ENCODE measurements at regions of chr17 and their contacts with region 1.

Region 1: GRCh38 chr17:41811549-41812380 is at the start of gene P3H4:
- DNase-seq: peak in 1 of 2 donors; percentile 85
- H3K4me3 ChIP-seq: peak within 1 kb of the TSS; percentile 81 to 89
- H3K27ac ChIP-seq: peak within 1 kb of the TSS; percentile 77 to 87
- H3K4me1 ChIP-seq: peaks cover 10 to 20% of the 10 kb centered on the region in 2 donors
- H3K27me3 ChIP-seq: no peaks in the 10 kb centered on the region
- CTCF ChIP-seq: peak; percentile 62 to 83 (median 76)
- total RNA-seq, gene P3H4: 61.4 TPM

Region 2: DNA sequence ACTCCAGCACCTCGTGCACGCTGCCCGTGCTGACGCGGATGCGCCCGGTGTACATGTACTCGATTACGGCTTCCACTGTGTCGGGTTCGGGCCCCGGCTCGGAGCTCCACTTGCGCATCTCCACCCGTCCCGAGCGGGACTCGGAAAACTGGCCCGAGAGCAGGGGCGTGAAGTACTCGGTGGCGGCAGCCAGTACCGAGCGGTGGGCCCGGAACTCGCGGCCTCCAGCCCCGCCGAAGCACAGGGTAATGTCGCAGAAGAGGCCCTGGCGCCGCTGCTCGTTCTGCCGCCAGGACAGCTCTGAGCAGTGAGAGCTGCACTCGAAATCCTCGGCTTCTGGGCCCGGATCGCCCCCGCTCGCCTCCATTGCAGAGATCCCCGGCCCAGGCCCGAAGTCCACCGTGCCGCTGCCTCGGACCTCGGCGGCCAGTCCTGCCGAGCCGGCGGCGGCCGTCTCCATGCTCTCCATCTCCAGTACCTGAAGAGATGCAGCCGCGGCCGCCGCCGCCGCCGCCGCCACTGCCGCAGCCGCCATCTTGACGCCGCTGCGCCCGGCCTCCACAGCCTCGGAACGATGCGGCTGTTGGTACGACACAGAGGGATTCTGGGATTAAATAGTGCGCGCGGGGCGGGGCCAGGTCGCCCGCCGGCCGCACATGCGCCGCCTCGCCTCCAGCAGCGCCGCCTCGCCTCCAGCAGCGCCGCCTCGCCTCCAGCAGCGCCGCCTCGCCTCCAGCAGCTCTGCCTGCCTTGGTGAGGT is 53.3 kb after region 1 on chr17 and contains the start of gene KLHL11:
- intact Hi-C with region 1: loop called (anchors 2 kb)
- DNase-seq: peak; percentile 56 to 93
- H3K4me3 ChIP-seq: peak within 1 kb of the TSS; percentile 80 to 99
- H3K27ac ChIP-seq: peak within 1 kb of the TSS; percentile 77 to 92
- H3K4me1 ChIP-seq: peaks cover 3 to 14% of the 10 kb centered on the region in 2 donors
- H3K27me3 ChIP-seq: no peaks in the 10 kb centered on the region
- CTCF ChIP-seq: no peak
- total RNA-seq, gene KLHL11: 8.9 TPM

Region 3: GRCh38 chr17:41918314-41919164 is 106.8 kb after region 1 on chr17 and contains the start of gene ACLY:
- intact Hi-C with region 1: loop called (anchors 1 kb)
- DNase-seq: peak; percentile 91 to 98
- H3K4me3 ChIP-seq: peak within 1 kb of the TSS; percentile 82 to 85
- H3K27ac ChIP-seq: peak within 1 kb of the TSS; percentile 78 to 87
- H3K4me1 ChIP-seq: peaks cover 2 to 22% of the 10 kb centered on the region in 2 donors
- H3K27me3 ChIP-seq: no peaks in the 10 kb centered on the region
- CTCF ChIP-seq: no peak
- total RNA-seq, gene ACLY: 64.4 TPM